MCF 10A (cell line): ENCODE measurements at regions of chr2 and their contacts with region 1.

Region 1: DNA sequence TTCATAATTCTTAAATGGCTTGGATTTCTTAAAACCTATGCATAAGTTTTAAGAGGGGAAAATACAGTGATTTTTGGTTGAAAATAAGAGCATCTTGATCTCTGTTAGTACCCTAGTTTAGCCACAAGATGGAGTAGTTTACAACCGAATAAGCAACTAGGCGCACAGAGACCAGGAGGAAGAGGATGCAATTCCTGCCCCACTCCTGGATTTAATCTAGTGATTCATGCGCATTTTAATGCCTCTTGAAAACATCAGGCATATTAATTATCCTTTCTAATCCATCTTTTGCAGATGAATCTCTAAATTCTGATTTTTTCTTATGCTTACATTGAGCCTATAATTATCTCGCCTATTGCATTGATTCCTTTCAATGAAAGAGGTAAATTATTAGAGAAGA is 76.7 kb downstream of the MRPS9 start:
- DNase-seq: peak; percentile 72
- H3K4me3 Mint-ChIP-seq: no peak overlapping the region
- H3K27ac Mint-ChIP-seq: no peak overlapping the region
- H3K4me1 Mint-ChIP-seq: no peaks in the 10 kb centered on the region
- H3K27me3 Mint-ChIP-seq: no peaks in the 10 kb centered on the region
- CTCF ChIP-seq: peak; percentile 76

Region 2: DNA sequence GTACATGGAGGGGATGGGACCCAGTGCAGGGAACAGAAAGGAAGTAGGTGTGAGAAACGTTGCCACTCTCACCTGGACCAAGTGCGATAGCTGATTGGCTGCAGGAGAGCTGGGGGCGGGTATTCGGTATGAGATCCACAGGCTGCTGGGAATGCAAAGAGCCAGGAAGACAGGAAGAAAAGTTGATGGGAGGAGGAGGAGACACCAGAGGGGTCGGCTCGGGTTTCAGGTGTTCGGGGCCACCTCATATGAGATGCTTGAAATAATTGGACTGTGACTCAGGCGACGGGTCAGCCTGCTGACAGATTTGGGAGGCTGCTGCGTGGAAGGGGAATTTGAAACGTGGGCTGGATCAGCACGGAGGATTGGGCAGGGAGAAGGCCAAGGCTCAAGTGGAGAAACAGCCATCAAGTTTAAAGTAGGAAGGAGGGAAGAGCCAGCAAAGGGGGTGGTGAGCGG is 11.6 kb before region 1 on chr2:
- CTCF ChIA-PET with region 1: interaction called, 93 read pairs
- POLR2A ChIA-PET with region 1: no interaction called
- intact Hi-C with region 1: no loop called
- DNase-seq: peak; percentile 58
- H3K4me3 Mint-ChIP-seq: no peak overlapping the region
- H3K27ac Mint-ChIP-seq: no peak overlapping the region
- H3K4me1 Mint-ChIP-seq: peaks cover 14% of the 10 kb centered on the region
- H3K27me3 Mint-ChIP-seq: no peaks in the 10 kb centered on the region
- CTCF ChIP-seq: no peak

Region 3: GRCh38 chr2:105166688-105167087 is 52.1 kb after region 1 on chr2:
- CTCF ChIA-PET with region 1: interaction called, 10 read pairs
- POLR2A ChIA-PET with region 1: interaction called, 3 read pairs
- intact Hi-C with region 1: no loop called
- DNase-seq: no peak
- H3K4me3 Mint-ChIP-seq: no peak overlapping the region
- H3K27ac Mint-ChIP-seq: no peak overlapping the region
- H3K4me1 Mint-ChIP-seq: no peaks in the 10 kb centered on the region
- H3K27me3 Mint-ChIP-seq: peaks cover 12% of the 10 kb centered on the region
- CTCF ChIP-seq: no peak

Region 4: DNA sequence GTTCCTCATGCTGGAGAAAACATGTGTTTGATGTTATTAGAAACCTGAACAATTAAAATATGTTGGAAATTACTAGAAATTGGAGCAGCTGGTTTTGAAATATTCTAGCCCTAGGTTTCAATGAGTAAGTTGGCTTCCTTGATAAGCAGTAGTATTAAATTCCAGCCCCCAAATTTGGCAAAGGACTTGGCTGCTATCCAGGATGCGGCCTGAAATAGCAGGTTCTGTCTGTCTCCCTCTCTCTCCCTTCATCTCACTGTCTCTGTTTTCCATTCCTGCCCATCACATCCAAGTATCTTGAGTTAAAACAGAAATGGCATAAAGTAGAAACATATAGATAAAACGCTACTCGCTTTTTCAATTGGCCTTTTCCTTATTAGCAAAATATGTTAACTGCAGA is 106.1 kb after region 1 on chr2:
- CTCF ChIA-PET with region 1: interaction called, 12 read pairs
- POLR2A ChIA-PET with region 1: no interaction called
- intact Hi-C with region 1: no loop called
- DNase-seq: no peak
- H3K4me3 Mint-ChIP-seq: no peak overlapping the region
- H3K27ac Mint-ChIP-seq: no peak overlapping the region
- H3K4me1 Mint-ChIP-seq: no peaks in the 10 kb centered on the region
- H3K27me3 Mint-ChIP-seq: peaks cover 35% of the 10 kb centered on the region
- CTCF ChIP-seq: no peak

Region 5: DNA sequence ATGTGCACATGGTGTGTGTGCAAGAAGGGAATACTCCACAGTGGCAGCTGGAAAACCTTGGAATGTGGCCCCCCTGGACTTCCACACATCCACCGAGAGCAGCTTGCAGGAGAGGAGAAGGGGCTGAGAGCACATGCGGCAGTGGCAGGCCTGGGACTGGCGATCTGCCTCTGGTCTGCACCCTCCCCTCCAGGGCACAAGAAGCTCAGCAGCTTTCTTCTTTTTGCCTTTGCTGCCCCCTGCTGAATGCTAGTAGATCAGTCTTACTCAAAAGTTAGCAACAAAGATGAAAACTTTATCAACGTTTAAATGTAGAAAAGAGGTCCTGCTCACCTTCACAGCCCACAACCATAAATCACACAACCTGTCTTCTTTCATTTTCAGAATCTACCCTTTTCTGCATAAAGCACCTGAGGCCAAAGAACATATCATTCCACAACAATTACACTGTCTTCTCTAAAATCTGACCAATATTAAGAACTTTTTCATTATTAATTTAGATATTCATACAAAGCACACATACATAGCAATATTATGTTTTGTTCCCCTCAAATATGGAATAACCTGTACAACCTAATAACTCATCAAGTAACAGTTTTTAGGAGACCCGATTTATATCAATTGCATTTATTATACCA is 180.4 kb after region 1 on chr2:
- CTCF ChIA-PET with region 1: interaction called, 31 read pairs
- POLR2A ChIA-PET with region 1: no interaction called
- intact Hi-C with region 1: loop called (anchors 1 kb)
- DNase-seq: peak; percentile 60
- H3K4me3 Mint-ChIP-seq: no peak overlapping the region
- H3K27ac Mint-ChIP-seq: no peak overlapping the region
- H3K4me1 Mint-ChIP-seq: peaks cover 14% of the 10 kb centered on the region
- H3K27me3 Mint-ChIP-seq: no peaks in the 10 kb centered on the region
- CTCF ChIP-seq: peak; percentile 48

Region 6: DNA sequence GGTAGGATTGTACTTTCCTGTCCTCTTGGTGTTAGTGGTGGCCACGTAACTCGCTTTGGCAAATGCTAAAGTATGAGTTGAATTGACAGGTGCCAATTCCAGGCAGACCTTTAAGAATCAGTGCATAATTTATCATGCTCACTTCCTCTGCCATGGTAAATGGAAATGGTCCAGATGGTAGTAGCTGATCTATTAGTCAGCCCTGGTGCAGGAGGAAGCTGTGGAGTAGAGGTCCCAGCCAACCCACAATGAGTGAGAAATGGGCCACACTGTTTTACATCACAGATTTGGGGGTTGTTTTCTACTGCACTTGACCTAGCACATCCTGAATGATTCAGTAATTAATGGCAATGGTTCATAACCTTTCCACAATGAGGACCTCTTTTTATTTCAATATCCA is 1249.2 kb after region 1 on chr2:
- CTCF ChIA-PET with region 1: no interaction called
- POLR2A ChIA-PET with region 1: no interaction called
- intact Hi-C with region 1: no loop called
- DNase-seq: no peak
- H3K4me3 Mint-ChIP-seq: no peak overlapping the region
- H3K27ac Mint-ChIP-seq: no peak overlapping the region
- H3K4me1 Mint-ChIP-seq: no peaks in the 10 kb centered on the region
- H3K27me3 Mint-ChIP-seq: no peaks in the 10 kb centered on the region
- CTCF ChIP-seq: no peak